ENCODE measurements at regions of chr20 and their contacts with region 1.

Region 1: DNA sequence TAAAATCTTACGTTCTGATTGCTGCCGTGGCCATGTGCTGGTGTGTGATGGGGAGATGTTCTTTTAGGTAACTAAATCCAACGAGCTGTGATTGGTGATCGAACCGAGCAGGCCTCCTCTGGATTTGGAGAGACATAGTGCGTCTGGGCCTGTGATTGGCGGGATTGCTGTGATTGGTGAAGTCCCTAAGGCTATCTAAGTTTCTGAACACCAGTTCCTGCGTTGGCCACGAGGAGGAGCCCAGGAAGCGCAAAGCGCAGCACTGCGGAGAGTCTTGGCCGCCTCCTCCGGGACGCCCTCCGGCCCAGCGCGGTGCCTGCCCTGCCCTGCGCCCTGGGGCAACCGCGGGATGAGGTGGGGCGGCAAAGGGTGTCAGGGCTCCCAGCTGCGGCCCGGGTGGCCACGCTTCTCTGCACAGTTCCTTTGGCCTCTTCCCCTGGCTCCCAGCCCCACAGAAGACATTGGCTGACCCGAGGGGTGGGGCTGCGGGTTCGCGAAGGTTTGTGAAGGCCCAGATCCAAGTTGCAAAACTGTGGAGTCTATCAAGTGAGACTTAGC is 33.0 kb downstream of the HNF4A start:
- DNase-seq: no peak
- ATAC-seq: peak; percentile 11
- H3K4me3 ChIP-seq: no peak overlapping the region
- H3K27ac ChIP-seq: no peak overlapping the region
- H3K4me1 ChIP-seq: peaks cover 72% of the 10 kb centered on the region
- H3K27me3 ChIP-seq: no peaks in the 10 kb centered on the region
- CTCF ChIP-seq: peak; percentile 75
- EP300 ChIP-seq: 0 out of 4 replicates have a peak, but pooled peaks of 1 of the 2 experiments have one; percentile 3
- POLR2A ChIP-seq: no peak
- RAD21 ChIP-seq: peak; percentile 80

Region 2: DNA sequence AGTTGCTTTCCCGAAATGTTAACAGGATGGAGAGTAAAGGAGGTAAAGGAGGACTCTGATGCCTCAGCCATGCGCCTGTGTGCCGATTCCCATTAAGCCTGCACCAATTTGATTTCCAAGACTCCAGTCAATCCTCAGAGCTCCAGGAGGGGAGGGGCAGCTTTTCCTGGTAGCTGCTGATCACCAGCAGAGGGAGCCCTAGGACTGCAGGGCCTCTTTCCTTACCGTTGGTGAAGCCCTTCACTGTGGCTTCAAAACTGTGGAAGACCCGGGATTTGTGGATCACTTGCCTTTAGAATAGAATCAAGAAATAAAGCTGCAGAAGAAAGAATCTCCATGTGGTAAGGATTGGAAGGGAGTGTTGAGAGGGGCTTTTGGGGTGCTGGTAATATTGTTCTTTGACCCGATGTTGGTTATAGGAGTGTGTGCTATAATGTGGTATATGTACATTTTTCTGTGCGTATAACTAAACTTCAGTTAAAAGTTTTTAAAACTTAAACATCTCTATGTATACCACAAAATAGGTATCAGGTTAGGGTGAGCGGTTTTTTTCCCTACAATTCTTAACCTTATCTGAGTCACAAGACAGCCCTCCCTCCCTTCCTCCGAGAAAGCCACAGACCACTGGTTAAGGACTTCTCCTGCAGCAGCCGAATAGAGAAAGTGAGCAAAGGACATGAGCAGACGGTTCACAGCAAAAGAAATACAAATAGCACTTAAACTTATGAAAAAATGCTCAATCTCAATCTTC is 171.0 kb before region 1 on chr20:
- CTCF ChIA-PET with region 1: interaction called, 73 read pairs
- POLR2A ChIA-PET with region 1: no interaction called
- in situ Hi-C with region 1: loop called (anchors 5 kb)
- intact Hi-C with region 1: loop called (anchors 1 kb)
- DNase-seq: peak; percentile 82
- ATAC-seq: peak; percentile 84
- H3K4me3 ChIP-seq: no peak overlapping the region
- H3K27ac ChIP-seq: no peak overlapping the region
- H3K4me1 ChIP-seq: peaks cover 28% of the 10 kb centered on the region
- H3K27me3 ChIP-seq: no peaks in the 10 kb centered on the region
- CTCF ChIP-seq: peak; percentile 99
- EP300 ChIP-seq: no peak
- POLR2A ChIP-seq: no peak
- RAD21 ChIP-seq: peak; percentile 98

Region 3: GRCh38 chr20:44253528-44253927 is 135.0 kb before region 1 on chr20:
- CTCF ChIA-PET with region 1: interaction called, 4 read pairs
- POLR2A ChIA-PET with region 1: no interaction called
- in situ Hi-C with region 1: no loop called
- intact Hi-C with region 1: loop called (anchors 1 kb)
- DNase-seq: peak; percentile 69
- ATAC-seq: peak; percentile 83
- H3K4me3 ChIP-seq: no peak overlapping the region
- H3K27ac ChIP-seq: no peak overlapping the region
- H3K4me1 ChIP-seq: peaks cover 15% of the 10 kb centered on the region
- H3K27me3 ChIP-seq: no peaks in the 10 kb centered on the region; a peak in 1 of 5 replicates
- CTCF ChIP-seq: peak; percentile 86
- EP300 ChIP-seq: peak in 1 of 2 experiments; percentile 15; a peak in 1 of 4 replicates
- POLR2A ChIP-seq: no peak
- RAD21 ChIP-seq: peak; percentile 47

Region 4: DNA sequence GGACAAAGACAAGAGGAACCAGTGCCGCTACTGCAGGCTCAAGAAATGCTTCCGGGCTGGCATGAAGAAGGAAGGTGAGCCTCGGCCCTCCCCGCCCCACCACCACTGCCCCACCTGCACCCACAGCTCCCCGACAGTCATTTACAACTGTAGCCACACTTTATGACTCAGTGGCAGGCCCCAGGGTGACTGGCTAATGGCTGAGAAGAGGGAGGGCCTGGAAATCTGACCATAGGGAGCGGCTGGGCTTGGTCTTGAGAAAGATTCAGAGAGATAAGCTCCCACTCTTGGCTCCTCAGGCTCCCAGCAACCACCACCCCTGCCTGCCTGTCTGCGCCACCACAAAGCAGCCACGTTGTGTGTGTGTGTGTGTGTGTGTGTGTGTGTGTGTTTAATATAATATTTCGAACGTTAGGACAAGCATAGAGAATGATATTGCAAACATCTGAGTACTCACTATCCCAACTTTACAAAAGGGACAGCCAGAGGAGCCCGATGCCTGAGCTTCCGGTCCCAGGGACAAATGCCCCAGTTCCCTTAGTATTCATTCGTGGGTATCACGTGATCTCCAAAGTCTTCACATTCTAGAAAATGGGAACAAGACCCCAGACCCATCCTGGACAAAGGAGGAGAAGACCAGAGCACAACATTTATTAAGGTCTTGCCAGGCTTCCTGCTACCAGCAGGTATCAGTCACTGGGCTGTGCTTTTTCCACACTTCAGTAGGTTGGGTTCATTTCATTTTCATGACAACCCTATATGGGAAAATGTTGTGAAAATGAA is 19.0 kb after region 1 on chr20:
- CTCF ChIA-PET with region 1: interaction called, 4 read pairs
- POLR2A ChIA-PET with region 1: interaction called, 556 read pairs
- in situ Hi-C with region 1: no loop called
- intact Hi-C with region 1: loop called (anchors 1 kb)
- DNase-seq: no peak
- ATAC-seq: no peak
- H3K4me3 ChIP-seq: no peak overlapping the region
- H3K27ac ChIP-seq: peak overlapping the region; percentile 55
- H3K4me1 ChIP-seq: peaks cover 100% of the 10 kb centered on the region
- H3K27me3 ChIP-seq: no peaks in the 10 kb centered on the region; a peak in 1 of 5 replicates
- CTCF ChIP-seq: no peak
- EP300 ChIP-seq: no peak
- POLR2A ChIP-seq: no peak; a peak in 1 of 4 replicates
- RAD21 ChIP-seq: no peak

Region 5: GRCh38 chr20:44460795-44461141 is 72.2 kb after region 1 on chr20:
- CTCF ChIA-PET with region 1: interaction called, 29 read pairs
- POLR2A ChIA-PET with region 1: interaction called, 4 read pairs
- in situ Hi-C with region 1: loop called (anchors 5 kb)
- intact Hi-C with region 1: loop called (anchors 1 kb)
- DNase-seq: peak; percentile 73
- ATAC-seq: peak; percentile 60
- H3K4me3 ChIP-seq: peak overlapping the region; percentile 6 to 55 (median 18); a peak in 4 of 6 replicates
- H3K27ac ChIP-seq: peak overlapping the region; percentile 58
- H3K4me1 ChIP-seq: peaks cover 69% of the 10 kb centered on the region
- H3K27me3 ChIP-seq: no peaks in the 10 kb centered on the region
- CTCF ChIP-seq: peak; percentile 89
- EP300 ChIP-seq: no peak
- POLR2A ChIP-seq: no peak
- RAD21 ChIP-seq: peak; percentile 82

Measured in HepG2 (cell line).